Activated T-helper 2 cell treated with anti-CD3 and anti-CD28 coated beads, Interferon-gamma antibody, Interleukin-2, Interleukin-4, amounts not matched to agents 10 μg/mL and 5 μg/mL and 100 μg/mL, durations not matched to agents 14 hours and 24 hours and 36 hours (primary cell): ENCODE measurements at regions of chr20 and their contacts with region 1.

Region 1: GRCh38 chr20:2523919-2524708 is 12.3 kb upstream of the TMC2 start:
- DNase-seq: peak; percentile 85
- H3K4me3 Mint-ChIP-seq: peak overlapping the region; percentile 86
- H3K27ac Mint-ChIP-seq: peak overlapping the region; percentile 80
- H3K4me1 Mint-ChIP-seq: peaks cover 14% of the 10 kb centered on the region
- H3K27me3 Mint-ChIP-seq: no peaks in the 10 kb centered on the region

Region 2: DNA sequence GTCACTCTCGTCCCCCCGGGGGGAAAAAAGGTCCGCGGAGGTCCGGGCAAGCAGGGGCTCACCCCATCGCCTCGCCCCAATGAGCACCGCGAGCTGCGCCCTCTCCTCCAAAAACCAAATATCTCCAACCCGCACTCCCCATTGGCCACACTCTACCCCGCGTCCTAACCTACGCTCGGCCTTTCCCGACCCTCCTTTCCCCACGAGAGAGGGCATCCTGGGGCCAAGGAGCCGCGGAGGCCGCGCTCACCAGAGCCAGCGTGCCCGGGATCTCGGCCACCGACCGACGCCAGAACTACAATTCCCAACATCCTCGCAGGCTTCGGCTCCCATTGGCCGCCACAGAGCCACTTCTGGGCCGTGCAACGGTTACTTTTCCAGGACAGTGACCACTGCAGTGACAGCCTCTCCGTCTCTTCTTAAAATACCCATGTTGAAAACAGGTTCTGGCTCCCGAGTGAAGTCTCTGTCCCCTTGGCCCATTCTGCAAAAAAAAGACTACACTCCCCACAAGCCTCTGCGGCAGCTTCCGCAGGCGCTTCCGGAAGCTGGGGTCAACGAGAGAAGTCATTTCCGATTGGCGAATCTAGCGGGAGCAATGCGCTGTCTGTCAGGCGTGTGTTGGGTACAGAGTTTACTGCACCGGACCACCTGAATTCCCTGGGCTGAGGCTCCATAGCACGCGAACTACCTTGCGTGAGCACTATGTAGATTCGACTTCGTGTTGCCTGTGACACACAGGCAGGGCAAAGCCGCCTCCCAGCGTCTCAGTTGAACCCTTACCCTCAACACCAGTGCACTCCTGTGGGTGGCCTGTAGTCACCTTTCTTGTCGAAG is 15.3 kb before region 1 on chr20 and contains the start of gene ZNF343:
- intact Hi-C with region 1: loop called (anchors 1 kb)
- DNase-seq: peak; percentile 72
- H3K4me3 Mint-ChIP-seq: peak within 1 kb of the TSS; percentile 99
- H3K27ac Mint-ChIP-seq: peak within 1 kb of the TSS; percentile 97
- H3K4me1 Mint-ChIP-seq: peaks cover 8% of the 10 kb centered on the region
- H3K27me3 Mint-ChIP-seq: peaks cover 11% of the 10 kb centered on the region
- total RNA-seq, gene ZNF343: 13.5 and 15.4 TPM in 2 replicates

Region 3: DNA sequence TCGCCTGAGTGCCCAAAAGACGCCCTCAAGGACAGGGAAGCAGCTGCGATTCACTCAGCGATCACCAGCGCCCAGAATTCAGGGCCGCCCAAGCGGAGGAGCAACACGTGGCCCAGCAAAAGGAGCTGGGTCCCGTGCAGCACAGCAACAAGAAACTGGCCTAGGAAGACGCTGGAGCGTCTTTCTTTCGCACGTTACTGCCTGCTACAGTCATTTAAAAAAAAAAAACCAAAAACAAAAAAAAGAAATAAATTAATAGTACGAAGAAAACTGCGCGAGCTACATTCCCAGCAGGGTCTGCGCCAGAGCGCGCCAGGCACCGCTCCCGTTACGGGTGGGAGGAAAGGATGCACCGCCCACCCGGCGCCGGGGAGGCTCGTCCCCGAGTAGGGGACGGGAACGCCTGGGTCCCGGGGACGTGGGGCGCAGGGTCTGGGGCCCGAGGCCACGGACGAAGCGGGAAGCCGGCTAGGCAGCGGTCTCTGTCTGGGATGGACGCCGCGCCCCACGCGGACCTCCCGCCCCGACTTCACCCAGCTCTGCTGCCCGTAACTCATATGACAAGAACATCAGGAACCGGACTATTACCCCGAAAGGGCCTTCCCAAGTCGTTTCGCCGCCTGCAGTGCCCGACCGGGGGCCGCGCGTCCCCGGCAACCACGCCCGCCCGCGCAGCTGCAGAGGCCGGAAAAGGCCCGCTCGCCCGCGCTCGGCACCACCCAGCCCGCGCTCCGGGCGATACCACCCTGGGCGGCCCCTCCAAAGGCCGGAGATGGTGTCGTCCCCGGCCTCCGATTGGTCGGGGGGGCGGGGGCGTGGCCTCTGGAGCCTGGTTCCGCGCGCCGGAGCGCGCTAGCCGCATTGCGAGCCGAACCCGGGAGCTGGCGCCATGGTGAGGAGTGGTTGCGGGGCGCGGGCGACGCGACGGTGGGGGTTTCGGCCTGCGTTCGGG is 127.9 kb after region 1 on chr20 and contains the start of gene NOP56:
- intact Hi-C with region 1: loop called (anchors 5 kb)
- DNase-seq: peak; percentile 92
- H3K4me3 Mint-ChIP-seq: peak within 1 kb of the TSS; percentile 89
- H3K27ac Mint-ChIP-seq: peak within 1 kb of the TSS; percentile 87
- H3K4me1 Mint-ChIP-seq: peaks cover 30% of the 10 kb centered on the region
- H3K27me3 Mint-ChIP-seq: no peaks in the 10 kb centered on the region
- total RNA-seq, gene NOP56: 693 and 705 TPM in 2 replicates